Spleen (tissue), 13 donors: ENCODE measurements at regions of chr19 and their contacts with region 1.

Region 1: GRCh38 chr19:36489118-36489919 is at the start of gene ZNF566:
- DNase-seq: peak; percentile 96
- H3K4me3 ChIP-seq: peak within 1 kb of the TSS; percentile 56 to 83 (median 69)
- H3K27ac ChIP-seq: peak within 1 kb of the TSS; percentile 94 to 97 (median 96)
- H3K4me1 ChIP-seq: peaks cover 0 to 25% (median 21%) of the 10 kb centered on the region in 6 donors
- H3K27me3 ChIP-seq: no peaks in the 10 kb centered on the region
- CTCF ChIP-seq: peak in 2 of 11 experiments; percentile 8 to 29
- POLR2A ChIP-seq: peak in 1 of 3 donors; percentile 17
- total RNA-seq, gene ZNF566: 14.6 to 24.8 (median 17.5) TPM

Region 2: GRCh38 chr19:36418287-36419001 is 70.9 kb before region 1 on chr19 and contains the start of gene ZFP82:
- intact Hi-C with region 1: loop called (anchors 5 kb)
- DNase-seq: peak; percentile 94
- H3K4me3 ChIP-seq: peak within 1 kb of the TSS; percentile 53 to 94 (median 67)
- H3K27ac ChIP-seq: peak within 1 kb of the TSS; percentile 87 to 96 (median 92)
- H3K4me1 ChIP-seq: peaks cover 8 to 39% (median 24%) of the 10 kb centered on the region in 6 donors
- H3K27me3 ChIP-seq: peaks cover 0 to 26% (median 10%) of the 10 kb centered on the region in 7 donors
- CTCF ChIP-seq: no peak
- POLR2A ChIP-seq: peak in 1 of 3 donors; percentile 36
- total RNA-seq, gene ZFP82: 6.2 to 12.7 (median 8.1) TPM